K562 (cell line): ENCODE measurements at regions of chr21 and their contacts with region 1.

Region 1: GRCh38 chr21:36141513-36141925 is 6.6 kb downstream of the CBR3 start:
- DNase-seq: peak; percentile 68 to 90 (median 84)
- ATAC-seq: peak; percentile 98
- H3K4me3 ChIP-seq: no peak overlapping the region
- H3K27ac ChIP-seq: no peak overlapping the region
- H3K4me1 ChIP-seq: no peaks in the 10 kb centered on the region; a peak in 1 of 5 replicates
- H3K27me3 ChIP-seq: peaks cover 6 to 39% of the 10 kb centered on the region in 2 experiments; a peak in 3 of 5 replicates
- CTCF ChIP-seq: peak; percentile 93 to 98 (median 95)
- EP300 ChIP-seq: no peak
- POLR2A ChIP-seq: no peak
- RAD21 ChIP-seq: peak; percentile 96 to 98

Region 2: GRCh38 chr21:36209626-36210171 is 68.2 kb after region 1 on chr21:
- CTCF ChIA-PET with region 1: interaction called, 31 read pairs
- POLR2A ChIA-PET with region 1: interaction called, 3 read pairs
- in situ Hi-C with region 1: no loop called
- intact Hi-C with region 1: loop called (anchors 1 kb)
- DNase-seq: peak; percentile 37 to 72 (median 41)
- ATAC-seq: peak; percentile 83
- H3K4me3 ChIP-seq: no peak overlapping the region
- H3K27ac ChIP-seq: no peak overlapping the region
- H3K4me1 ChIP-seq: no peaks in the 10 kb centered on the region
- H3K27me3 ChIP-seq: peaks cover 37 to 69% of the 10 kb centered on the region in 2 experiments
- CTCF ChIP-seq: peak; percentile 76 to 85 (median 78)
- EP300 ChIP-seq: no peak
- POLR2A ChIP-seq: no peak
- RAD21 ChIP-seq: peak; percentile 93 to 96

Region 3: GRCh38 chr21:36359185-36359584 is 217.7 kb after region 1 on chr21:
- CTCF ChIA-PET with region 1: no interaction called
- POLR2A ChIA-PET with region 1: no interaction called
- in situ Hi-C with region 1: no loop called
- intact Hi-C with region 1: no loop called
- DNase-seq: no peak
- ATAC-seq: no peak
- H3K4me3 ChIP-seq: no peak overlapping the region
- H3K27ac ChIP-seq: no peak overlapping the region
- H3K4me1 ChIP-seq: no peaks in the 10 kb centered on the region
- H3K27me3 ChIP-seq: no peaks in the 10 kb centered on the region
- CTCF ChIP-seq: no peak
- EP300 ChIP-seq: no peak
- POLR2A ChIP-seq: no peak
- RAD21 ChIP-seq: no peak

Region 4: DNA sequence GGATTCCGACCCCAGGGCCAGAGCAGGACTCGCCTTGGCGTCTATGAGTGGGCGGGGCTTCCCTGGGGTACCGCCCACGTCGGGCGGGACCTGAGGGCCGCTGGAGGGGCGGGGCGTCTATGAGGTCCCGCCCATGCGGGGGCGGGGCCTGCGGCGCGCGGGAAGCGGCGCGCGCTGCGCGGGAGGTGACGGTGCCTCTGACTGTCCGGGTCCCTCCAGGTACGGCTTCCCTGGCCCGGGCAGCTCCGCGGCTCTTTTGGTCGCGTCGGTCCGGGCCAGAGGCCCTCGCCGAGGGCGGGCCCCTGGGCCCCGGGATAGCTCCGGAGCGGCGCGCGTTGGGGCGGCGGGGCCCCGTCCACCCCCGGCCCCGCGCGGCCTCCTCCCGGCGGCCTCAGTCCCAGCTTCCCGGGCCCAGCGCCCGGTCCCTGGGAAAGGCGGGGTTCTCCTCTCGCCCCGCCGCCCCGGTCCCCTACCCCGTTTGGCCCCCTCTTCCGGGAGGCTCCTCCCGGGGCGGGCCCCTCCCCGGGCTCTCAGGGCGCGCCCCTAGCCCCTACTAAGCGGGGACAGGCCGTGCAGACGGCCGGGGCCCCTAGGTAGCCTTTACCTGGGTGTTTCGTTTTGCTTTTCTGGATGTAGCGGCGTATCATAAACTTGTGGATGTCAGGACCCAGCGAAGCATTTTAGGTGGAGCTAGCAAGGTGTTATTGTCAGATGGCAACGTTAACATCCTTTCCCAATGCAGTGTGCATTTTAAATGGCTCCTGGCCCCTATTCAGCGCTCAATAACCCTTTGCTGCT is 243.9 kb after region 1 on chr21 and contains the start of gene CHAF1B:
- CTCF ChIA-PET with region 1: interaction called, 6 read pairs
- POLR2A ChIA-PET with region 1: interaction called, 3 read pairs
- in situ Hi-C with region 1: no loop called
- intact Hi-C with region 1: loop called (anchors 5 kb)
- DNase-seq: peak; percentile 89 to 99 (median 98)
- ATAC-seq: peak; percentile 96
- H3K4me3 ChIP-seq: peak within 1 kb of the TSS; percentile 95
- H3K27ac ChIP-seq: peak within 1 kb of the TSS; percentile 79
- H3K4me1 ChIP-seq: peaks cover 9 to 21% of the 10 kb centered on the region in 2 experiments; a peak in 4 of 5 replicates
- H3K27me3 ChIP-seq: no peaks in the 10 kb centered on the region
- CTCF ChIP-seq: no peak
- EP300 ChIP-seq: no peak
- POLR2A ChIP-seq: peak; percentile 68
- RAD21 ChIP-seq: no peak
- polyA plus RNA-seq, gene CHAF1B: 7.5 to 12.2 TPM

Region 5: GRCh38 chr21:36589355-36589971 is 447.9 kb after region 1 on chr21:
- CTCF ChIA-PET with region 1: no interaction called
- POLR2A ChIA-PET with region 1: no interaction called
- in situ Hi-C with region 1: no loop called
- intact Hi-C with region 1: loop called (anchors 5 kb)
- DNase-seq: peak; percentile 61 to 66 (median 66)
- ATAC-seq: peak; percentile 93
- H3K4me3 ChIP-seq: no peak overlapping the region
- H3K27ac ChIP-seq: no peak overlapping the region
- H3K4me1 ChIP-seq: no peaks in the 10 kb centered on the region
- H3K27me3 ChIP-seq: peaks cover 34 to 35% of the 10 kb centered on the region in 2 experiments
- CTCF ChIP-seq: peak; percentile 80 to 86 (median 84)
- EP300 ChIP-seq: no peak
- POLR2A ChIP-seq: no peak
- RAD21 ChIP-seq: peak; percentile 73 to 85